ENCODE measurements at regions of chr19 and their contacts with region 1.

Region 1: DNA sequence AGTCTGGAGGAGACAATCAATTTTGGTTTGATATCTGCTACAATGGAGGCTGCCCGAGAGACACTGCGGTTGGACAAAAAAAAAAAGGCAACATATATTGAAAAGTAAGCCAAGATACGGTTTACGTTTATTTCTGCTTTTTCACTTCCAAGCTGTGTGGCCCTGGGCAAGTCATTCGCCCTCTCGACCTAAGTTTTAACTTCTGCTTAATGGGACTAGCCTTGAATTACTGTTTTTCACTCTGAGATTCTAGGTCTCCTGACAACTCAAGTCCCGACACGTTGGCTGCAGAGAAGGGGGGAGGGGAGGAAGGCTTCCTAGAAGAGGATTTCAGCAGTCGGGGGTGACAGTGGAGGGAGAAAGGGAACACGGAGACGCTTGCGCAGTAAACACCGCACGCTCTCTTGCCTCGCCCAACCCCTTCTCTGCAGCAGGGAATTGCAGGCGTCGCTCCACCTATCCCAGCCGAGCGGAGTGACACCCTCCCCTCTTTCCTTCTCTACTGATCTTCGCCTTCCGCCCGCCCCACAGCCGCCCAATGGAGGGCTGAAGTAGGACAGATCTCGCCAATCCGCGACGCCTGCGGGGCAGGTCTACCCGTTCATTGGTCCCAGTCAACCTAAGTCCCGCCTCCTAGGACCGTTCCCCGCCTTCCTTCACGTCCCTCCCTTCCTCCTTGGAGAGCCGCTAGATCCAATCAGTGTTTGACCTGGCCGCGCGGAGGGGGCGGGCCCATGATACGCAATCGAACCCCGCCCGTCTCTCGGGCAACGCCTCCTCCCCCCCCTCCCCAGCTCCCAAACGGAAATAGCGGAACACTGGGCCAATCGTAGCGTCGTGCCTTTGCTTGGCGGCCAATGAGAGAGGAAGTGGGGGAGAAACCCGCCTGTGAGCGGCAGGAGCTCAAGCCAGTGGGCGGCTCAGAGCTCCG is 529 bp upstream of the AP2A1 start:
- DNase-seq: peak; percentile 99 to 100
- H3K4me3 ChIP-seq: peak overlapping the region in 2 of 3 donors; percentile 9 to 88
- H3K27ac ChIP-seq: peak overlapping the region; percentile 87 to 92 (median 91)
- H3K4me1 ChIP-seq: peaks cover 14 to 21% of the 10 kb centered on the region in 2 donors
- H3K27me3 ChIP-seq: no peaks in the 10 kb centered on the region
- CTCF ChIP-seq: peak in 1 of 6 experiments; percentile 18
- POLR2A ChIP-seq: peak; percentile 39 to 86

Region 2: GRCh38 chr19:49801966-49802690 is 35.9 kb after region 1 on chr19:
- intact Hi-C with region 1: loop called (anchors 5 kb)
- DNase-seq: peak; percentile 93 to 94
- H3K4me3 ChIP-seq: peak overlapping the region in 1 of 3 donors; percentile 26
- H3K27ac ChIP-seq: peak overlapping the region in 2 of 3 donors; percentile 17 to 35
- H3K4me1 ChIP-seq: peaks cover 0 to 13% of the 10 kb centered on the region in 2 donors
- H3K27me3 ChIP-seq: no peaks in the 10 kb centered on the region
- CTCF ChIP-seq: peak in 3 of 6 experiments; percentile 17 to 26 (median 24)
- POLR2A ChIP-seq: no peak

Region 3: GRCh38 chr19:49817964-49818648 is 51.8 kb after region 1 on chr19 and contains the start of gene MED25:
- intact Hi-C with region 1: no loop called
- DNase-seq: peak; percentile 79 to 81
- H3K4me3 ChIP-seq: peak within 1 kb of the TSS; percentile 61 to 70 (median 64)
- H3K27ac ChIP-seq: peak within 1 kb of the TSS; percentile 85 to 97 (median 92)
- H3K4me1 ChIP-seq: peaks cover 31 to 35% of the 10 kb centered on the region in 2 donors
- H3K27me3 ChIP-seq: no peaks in the 10 kb centered on the region
- CTCF ChIP-seq: peak in 5 of 6 experiments; percentile 22 to 68 (median 33)
- POLR2A ChIP-seq: peak; percentile 79 to 80
- total RNA-seq, gene MED25: 42.6 to 50.2 (median 44.9) TPM

Region 4: DNA sequence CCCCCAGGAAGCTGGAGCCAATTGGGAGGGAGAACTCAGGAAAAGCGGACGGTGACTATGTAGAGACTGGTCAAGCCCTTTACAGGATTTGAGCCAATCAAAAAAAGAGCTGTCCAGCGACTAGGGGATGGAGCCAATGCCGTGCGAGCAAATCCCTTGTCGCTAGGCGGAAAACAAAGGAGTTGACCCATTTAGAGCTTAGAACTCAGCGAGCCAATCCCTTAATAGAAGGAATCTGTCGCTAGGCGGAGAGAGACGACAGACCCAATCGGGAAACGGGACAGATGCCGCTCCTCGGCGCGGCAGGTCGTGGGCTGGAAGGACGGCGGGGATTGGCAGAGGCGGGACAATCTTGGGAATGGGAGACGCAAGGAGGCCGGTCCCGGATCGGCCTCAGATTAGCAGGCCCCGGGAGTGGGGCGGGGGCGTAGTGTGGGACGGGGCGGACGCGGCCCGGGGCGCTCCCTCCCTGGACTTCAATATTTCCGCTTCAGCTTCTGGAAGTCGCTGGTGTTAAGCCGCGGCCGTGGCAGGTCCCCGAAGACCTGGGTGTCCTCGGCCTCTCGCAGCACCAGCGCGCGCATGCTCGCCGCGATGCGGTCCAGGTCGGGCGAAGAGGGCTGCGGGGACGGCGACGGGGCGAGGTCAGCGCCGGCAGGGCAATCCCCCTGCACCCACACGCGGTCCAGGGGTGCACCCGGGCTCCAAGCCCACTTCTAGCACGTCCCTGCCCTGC is 103.3 kb after region 1 on chr19:
- intact Hi-C with region 1: loop called (anchors 10 kb)
- DNase-seq: peak; percentile 96
- H3K4me3 ChIP-seq: peak overlapping the region; percentile 38 to 55 (median 48)
- H3K27ac ChIP-seq: peak overlapping the region; percentile 87 to 95 (median 89)
- H3K4me1 ChIP-seq: peaks cover 22 to 47% of the 10 kb centered on the region in 2 donors
- H3K27me3 ChIP-seq: no peaks in the 10 kb centered on the region
- CTCF ChIP-seq: no peak
- POLR2A ChIP-seq: peak in 1 of 2 donors; percentile 83

Region 5: GRCh38 chr19:50198429-50199258 is 432.4 kb after region 1 on chr19:
- intact Hi-C with region 1: no loop called
- DNase-seq: peak; percentile 86 to 88
- H3K4me3 ChIP-seq: no peak overlapping the region
- H3K27ac ChIP-seq: peak overlapping the region; percentile 72 to 87 (median 83)
- H3K4me1 ChIP-seq: peaks cover 17 to 31% of the 10 kb centered on the region in 2 donors
- H3K27me3 ChIP-seq: no peaks in the 10 kb centered on the region
- CTCF ChIP-seq: no peak
- POLR2A ChIP-seq: no peak

Measured in thyroid gland (tissue), 4 donors.